ENCODE measurements at regions of chr3 and their contacts with region 1.

Region 1: DNA sequence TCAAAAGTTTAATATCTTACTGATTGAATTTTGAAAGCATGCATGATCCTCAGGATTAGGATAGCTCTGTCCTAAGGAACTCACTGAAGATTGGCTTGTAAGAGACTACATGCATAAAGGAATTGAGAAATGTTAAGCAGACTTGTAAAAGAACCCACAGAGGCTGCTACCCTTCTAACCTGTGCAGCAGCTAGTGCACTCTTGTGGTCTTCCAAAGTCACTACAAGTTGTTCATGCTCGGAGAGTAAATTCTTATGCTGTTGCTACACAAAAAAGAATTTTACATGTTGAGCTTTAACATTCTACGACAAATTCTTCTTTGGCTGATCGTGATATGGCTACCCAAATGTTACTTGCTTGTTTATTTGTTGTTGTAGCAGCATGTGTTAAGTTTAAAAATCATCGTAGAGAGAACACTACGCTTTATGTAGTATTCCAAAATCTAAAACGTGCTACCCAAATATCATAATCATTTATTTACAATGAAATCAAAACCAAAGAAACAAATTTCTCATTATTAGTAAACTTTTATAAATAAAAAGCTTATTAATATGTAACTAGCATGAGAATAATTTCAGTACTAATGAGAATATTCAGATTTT is 55.0 kb downstream of the GOLIM4 start:
- DNase-seq: peak; percentile 74
- ATAC-seq: peak; percentile 90
- H3K4me3 ChIP-seq: no peak overlapping the region
- H3K27ac ChIP-seq: no peak overlapping the region
- H3K4me1 ChIP-seq: no peaks in the 10 kb centered on the region
- H3K27me3 ChIP-seq: no peaks in the 10 kb centered on the region
- CTCF ChIP-seq: peak; percentile 65
- POLR2A ChIP-seq: no peak
- RAD21 ChIP-seq: peak; percentile 64

Region 2: DNA sequence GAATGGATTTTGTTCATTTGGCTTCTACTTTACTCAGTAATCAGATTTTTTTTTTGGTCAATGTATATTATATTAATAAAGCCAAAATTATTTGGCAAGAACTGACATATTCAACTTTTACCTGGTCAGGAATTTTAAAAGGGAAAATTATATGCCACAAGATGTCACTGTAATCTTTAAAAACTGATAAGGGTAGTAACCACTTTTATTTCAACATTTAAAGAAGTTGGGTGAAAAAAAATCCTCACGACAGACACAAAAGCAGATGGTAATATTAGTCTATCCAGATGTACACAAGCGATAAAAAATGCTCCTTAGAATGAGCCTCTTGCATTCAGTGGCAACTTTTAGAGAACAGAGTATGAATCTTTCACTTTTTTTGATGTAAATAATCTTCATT is 203.2 kb before region 1 on chr3:
- CTCF ChIA-PET with region 1: no interaction called
- POLR2A ChIA-PET with region 1: no interaction called
- dilution Hi-C with region 1: no loop called
- in situ Hi-C with region 1: no loop called
- intact Hi-C with region 1: loop called (anchors 1 kb)
- DNase-seq: no peak
- ATAC-seq: no peak
- H3K4me3 ChIP-seq: no peak overlapping the region
- H3K27ac ChIP-seq: no peak overlapping the region
- H3K4me1 ChIP-seq: no peaks in the 10 kb centered on the region
- H3K27me3 ChIP-seq: no peaks in the 10 kb centered on the region
- CTCF ChIP-seq: 0 out of 2 replicates have a peak, but pooled peaks have one; percentile 19
- POLR2A ChIP-seq: no peak
- RAD21 ChIP-seq: 0 out of 2 replicates have a peak, but pooled peaks have one; percentile 9

Region 3: DNA sequence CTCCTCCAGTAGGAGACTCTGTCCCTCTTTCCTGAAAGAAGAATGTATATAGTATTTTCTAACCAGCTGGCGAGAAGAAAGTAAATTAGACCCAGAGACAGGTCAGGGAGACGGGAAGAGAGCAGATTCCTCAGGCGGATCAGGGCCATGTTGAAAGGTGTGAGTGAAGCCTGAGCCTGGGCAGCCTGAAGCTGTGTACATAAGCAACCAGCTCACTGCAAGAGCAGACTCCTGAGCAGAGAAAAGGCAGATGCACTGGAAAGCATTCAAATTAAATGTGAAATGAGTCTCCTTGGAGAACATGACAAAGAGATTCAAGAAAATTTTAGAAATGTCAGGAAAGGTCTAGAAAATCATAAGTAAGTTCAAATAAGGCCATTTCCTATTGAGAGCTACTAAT is 110.7 kb before region 1 on chr3:
- CTCF ChIA-PET with region 1: interaction called, 11 read pairs
- POLR2A ChIA-PET with region 1: no interaction called
- dilution Hi-C with region 1: no loop called
- in situ Hi-C with region 1: loop called (anchors 10 kb)
- intact Hi-C with region 1: loop called (anchors 1 kb)
- DNase-seq: no peak
- ATAC-seq: peak; percentile 42; the same call in 1 of the 2 replicates
- H3K4me3 ChIP-seq: no peak overlapping the region
- H3K27ac ChIP-seq: no peak overlapping the region
- H3K4me1 ChIP-seq: no peaks in the 10 kb centered on the region
- H3K27me3 ChIP-seq: no peaks in the 10 kb centered on the region
- CTCF ChIP-seq: no peak
- POLR2A ChIP-seq: no peak
- RAD21 ChIP-seq: no peak

Region 4: GRCh38 chr3:168295027-168295426 is 254.3 kb after region 1 on chr3:
- CTCF ChIA-PET with region 1: no interaction called
- POLR2A ChIA-PET with region 1: no interaction called
- dilution Hi-C with region 1: no loop called
- in situ Hi-C with region 1: no loop called
- intact Hi-C with region 1: no loop called
- DNase-seq: no peak
- ATAC-seq: no peak
- H3K4me3 ChIP-seq: no peak overlapping the region
- H3K27ac ChIP-seq: no peak overlapping the region
- H3K4me1 ChIP-seq: no peaks in the 10 kb centered on the region
- H3K27me3 ChIP-seq: no peaks in the 10 kb centered on the region
- CTCF ChIP-seq: no peak
- POLR2A ChIP-seq: no peak
- RAD21 ChIP-seq: no peak

Measured in IMR-90 (cell line).